ENCODE measurements at regions of chr17 and their contacts with region 1.

Region 1: GRCh38 chr17:27236717-27237315 is 57.1 kb upstream of the WSB1 start:
- DNase-seq: peak; percentile 39
- H3K4me3 Mint-ChIP-seq: no peak overlapping the region
- H3K27ac Mint-ChIP-seq: no peak overlapping the region
- H3K4me1 Mint-ChIP-seq: peaks cover 27% of the 10 kb centered on the region
- H3K27me3 Mint-ChIP-seq: peaks cover 18% of the 10 kb centered on the region

Region 2: DNA sequence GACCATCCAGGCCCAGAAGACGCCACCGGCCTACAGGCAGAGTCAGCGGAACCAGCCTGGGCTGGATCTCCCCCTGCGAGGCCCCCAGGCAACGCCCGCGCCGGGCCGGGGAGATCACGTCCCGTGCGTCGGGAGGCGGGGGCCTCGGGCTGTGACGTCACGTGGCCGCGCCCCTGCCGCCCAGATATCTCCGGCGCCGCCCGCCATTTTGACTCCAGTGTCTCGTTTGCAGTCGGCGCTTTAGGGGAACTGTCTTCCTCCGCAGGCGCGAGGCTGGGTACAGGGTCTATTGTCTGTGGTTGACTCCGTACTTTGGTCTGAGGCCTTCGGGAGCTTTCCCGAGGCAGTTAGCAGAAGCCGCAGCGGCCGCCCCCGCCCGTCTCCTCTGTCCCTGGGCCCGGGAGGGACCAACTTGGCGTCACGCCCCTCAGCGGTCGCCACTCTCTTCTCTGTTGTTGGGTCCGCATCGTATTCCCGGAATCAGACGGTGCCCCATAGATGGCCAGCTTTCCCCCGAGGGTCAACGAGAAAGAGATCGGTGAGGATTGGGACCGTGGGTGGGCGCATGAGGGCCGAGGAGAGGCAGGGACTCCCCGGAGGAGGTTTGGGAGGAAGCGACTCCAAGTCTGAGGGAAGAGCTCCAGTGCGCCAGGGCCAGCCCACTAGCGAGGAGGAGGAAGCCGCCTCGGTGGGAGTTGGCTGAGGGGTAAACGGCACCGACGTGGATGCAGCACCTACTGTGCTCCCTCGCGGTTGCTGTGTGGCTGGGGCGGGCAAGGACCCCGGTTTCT is 57.3 kb after region 1 on chr17 and contains the start of gene WSB1:
- intact Hi-C with region 1: loop called (anchors 1 kb)
- DNase-seq: peak; percentile 89
- H3K4me3 Mint-ChIP-seq: peak within 1 kb of the TSS; percentile 97
- H3K27ac Mint-ChIP-seq: peak within 1 kb of the TSS; percentile 99
- H3K4me1 Mint-ChIP-seq: peaks cover 29% of the 10 kb centered on the region
- H3K27me3 Mint-ChIP-seq: no peaks in the 10 kb centered on the region
- total RNA-seq, gene WSB1: 165 and 170 TPM in 2 replicates

Region 3: DNA sequence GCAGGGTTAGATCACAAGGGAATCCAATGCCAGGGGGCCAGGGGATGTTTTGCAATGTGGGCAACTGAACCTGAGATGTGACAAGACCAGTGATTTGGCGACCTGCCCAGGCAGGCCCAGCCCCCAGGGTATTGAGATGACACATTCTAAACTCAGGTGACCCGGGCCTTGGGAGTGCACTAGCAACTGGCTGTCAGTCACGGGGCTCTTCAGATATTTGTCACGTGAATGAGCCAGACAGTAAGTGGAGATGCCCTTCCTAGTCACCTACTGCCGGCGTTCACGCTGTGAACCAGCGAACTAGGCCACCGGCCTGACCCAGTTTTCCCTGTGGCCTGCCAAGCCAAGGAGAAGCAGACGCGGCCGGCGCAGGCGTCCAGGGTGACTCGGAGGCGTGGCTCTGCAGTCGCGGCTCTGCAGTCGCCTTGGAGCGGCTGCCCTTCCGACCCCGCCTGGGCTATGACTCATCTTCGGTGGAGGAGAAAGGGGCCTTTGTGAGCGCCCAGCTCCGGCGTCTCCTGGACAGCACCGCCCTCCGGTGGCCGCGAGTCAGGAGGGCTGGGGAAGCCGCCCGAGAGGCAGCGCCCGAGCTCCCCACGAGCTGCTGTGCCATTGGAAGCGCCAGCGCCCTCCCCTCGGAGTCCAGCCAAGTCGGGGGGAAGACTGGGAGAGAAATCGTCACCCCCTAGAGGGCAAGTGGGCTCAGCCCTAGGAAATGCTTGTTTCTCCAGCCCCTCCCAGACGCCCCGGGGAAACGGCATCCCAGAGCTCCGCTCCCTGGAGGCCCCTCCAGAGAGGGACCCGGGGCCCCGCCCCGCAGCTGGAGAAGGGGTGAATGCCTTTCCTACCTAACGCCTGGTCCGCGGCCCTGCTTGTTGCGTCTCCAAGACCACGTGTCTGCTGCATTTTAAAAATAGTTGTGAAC is 95.9 kb after region 1 on chr17:
- intact Hi-C with region 1: loop called (anchors 1 kb)
- DNase-seq: peak; percentile 84
- H3K4me3 Mint-ChIP-seq: peak overlapping the region; percentile 85
- H3K27ac Mint-ChIP-seq: peak overlapping the region; percentile 99
- H3K4me1 Mint-ChIP-seq: peaks cover 23% of the 10 kb centered on the region
- H3K27me3 Mint-ChIP-seq: no peaks in the 10 kb centered on the region

Region 4: DNA sequence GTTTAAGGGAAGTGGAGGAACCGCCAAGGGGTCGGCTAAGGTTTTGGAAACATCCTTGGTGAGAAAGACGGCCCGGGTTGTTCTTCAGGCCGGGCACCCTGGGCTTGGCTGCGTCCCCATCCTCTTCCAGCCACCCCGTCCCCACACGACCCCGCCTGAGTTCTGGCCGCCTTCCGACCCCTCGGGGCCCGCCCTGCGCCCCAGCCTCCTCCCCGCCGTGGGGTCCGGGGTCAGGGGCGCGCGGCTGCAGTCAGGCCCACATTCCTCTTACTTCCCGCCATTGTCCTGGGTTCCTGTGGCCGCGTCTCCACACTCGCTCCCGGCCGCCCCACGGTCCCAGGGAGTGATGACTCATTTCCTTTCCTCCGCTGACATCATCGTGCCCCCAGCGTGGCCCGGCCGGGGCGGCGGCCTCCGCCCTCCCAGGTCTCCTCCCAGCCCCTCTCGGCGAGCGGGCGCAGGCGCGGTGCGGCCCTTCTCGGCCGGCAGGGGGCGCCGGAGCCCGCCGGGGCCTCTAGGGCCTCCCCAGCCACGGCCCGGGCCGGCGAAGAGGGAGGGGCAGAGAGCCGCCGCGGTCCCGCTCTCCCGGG is 116.7 kb after region 1 on chr17:
- intact Hi-C with region 1: loop called (anchors 1 kb)
- DNase-seq: peak; percentile 84
- H3K4me3 Mint-ChIP-seq: peak overlapping the region; percentile 78
- H3K27ac Mint-ChIP-seq: peak overlapping the region; percentile 96
- H3K4me1 Mint-ChIP-seq: peaks cover 26% of the 10 kb centered on the region
- H3K27me3 Mint-ChIP-seq: no peaks in the 10 kb centered on the region

Region 5: DNA sequence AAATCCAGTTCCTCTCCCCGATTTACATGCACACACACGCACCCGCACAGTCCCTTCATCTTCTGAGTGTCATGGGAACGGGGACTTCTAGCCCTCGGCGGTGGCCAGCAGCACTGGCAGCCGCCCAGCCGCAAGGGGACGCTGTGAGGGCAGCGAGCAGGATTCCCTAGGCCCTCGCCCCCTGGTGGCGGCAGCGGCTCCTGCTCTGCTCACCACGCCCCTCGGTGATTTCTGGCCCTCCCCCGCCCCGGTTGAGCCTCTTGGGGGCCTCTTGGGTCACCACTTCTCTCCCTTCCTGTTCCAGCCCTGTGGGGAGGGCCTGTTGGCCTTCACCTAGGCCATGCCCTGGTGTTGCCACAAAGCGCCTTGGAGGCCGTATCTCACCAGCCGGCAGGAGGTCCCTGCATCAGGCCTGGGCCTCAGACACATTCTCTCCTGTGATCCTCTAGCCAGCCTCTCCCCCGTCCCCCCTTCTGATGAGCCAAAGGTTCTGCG is 144.2 kb after region 1 on chr17:
- intact Hi-C with region 1: loop called (anchors 1 kb)
- DNase-seq: peak; percentile 69
- H3K4me3 Mint-ChIP-seq: no peak overlapping the region
- H3K27ac Mint-ChIP-seq: no peak overlapping the region
- H3K4me1 Mint-ChIP-seq: peaks cover 6% of the 10 kb centered on the region
- H3K27me3 Mint-ChIP-seq: peaks cover 17% of the 10 kb centered on the region

Measured in activated T-helper 2 cell treated with anti-CD3 and anti-CD28 coated beads, Interferon-gamma antibody, Interleukin-2, Interleukin-4, amounts not matched to agents 10 μg/mL and 5 μg/mL and 100 μg/mL, durations not matched to agents 14 hours and 24 hours and 36 hours (primary cell).